AG04450 (cell line): ENCODE measurements at regions of chr18 and their contacts with region 1.

Region 1: GRCh38 chr18:52670896-52671295 is 330.9 kb downstream of the DCC start:
- DNase-seq: no peak
- H3K4me3 ChIP-seq: no peak overlapping the region
- H3K27ac ChIP-seq: no peak overlapping the region
- H3K27me3 ChIP-seq: no peaks in the 10 kb centered on the region
- CTCF ChIP-seq: peak; percentile 47

Region 2: GRCh38 chr18:51668101-51668500 is 1002.8 kb before region 1 on chr18:
- CTCF ChIA-PET with region 1: interaction called, 12 read pairs
- POLR2A ChIA-PET with region 1: no interaction called
- DNase-seq: peak; percentile 7
- H3K4me3 ChIP-seq: no peak overlapping the region
- H3K27ac ChIP-seq: no peak overlapping the region
- H3K27me3 ChIP-seq: no peaks in the 10 kb centered on the region
- CTCF ChIP-seq: peak; percentile 64

Region 3: GRCh38 chr18:52339891-52340371 is 331.0 kb before region 1 on chr18 and contains the start of gene DCC:
- CTCF ChIA-PET with region 1: interaction called, 12 read pairs
- POLR2A ChIA-PET with region 1: no interaction called
- DNase-seq: peak; percentile 15
- H3K4me3 ChIP-seq: peak within 1 kb of the TSS; percentile 57
- H3K27ac ChIP-seq: no peak within 1 kb of the TSS
- H3K27me3 ChIP-seq: peaks cover 21% of the 10 kb centered on the region
- CTCF ChIP-seq: peak; percentile 52
- polyA plus RNA-seq, gene DCC: 0.46 and 0.67 TPM in 2 replicates